Activated T-helper 1 cell treated with anti-CD3 and anti-CD28 coated beads, Interleukin-12 subunit alpha, Interleukin-12 subunit beta, Interleukin-2, Interleukin-4 antibody, amounts not matched to agents 30 ng/mL and 10 ng/mL and 1 ng/mL, durations not matched to agents 14 hours and 24 hours and 36 hours (primary cell): ENCODE measurements at regions of chr9 and their contacts with region 1.

Region 1: DNA sequence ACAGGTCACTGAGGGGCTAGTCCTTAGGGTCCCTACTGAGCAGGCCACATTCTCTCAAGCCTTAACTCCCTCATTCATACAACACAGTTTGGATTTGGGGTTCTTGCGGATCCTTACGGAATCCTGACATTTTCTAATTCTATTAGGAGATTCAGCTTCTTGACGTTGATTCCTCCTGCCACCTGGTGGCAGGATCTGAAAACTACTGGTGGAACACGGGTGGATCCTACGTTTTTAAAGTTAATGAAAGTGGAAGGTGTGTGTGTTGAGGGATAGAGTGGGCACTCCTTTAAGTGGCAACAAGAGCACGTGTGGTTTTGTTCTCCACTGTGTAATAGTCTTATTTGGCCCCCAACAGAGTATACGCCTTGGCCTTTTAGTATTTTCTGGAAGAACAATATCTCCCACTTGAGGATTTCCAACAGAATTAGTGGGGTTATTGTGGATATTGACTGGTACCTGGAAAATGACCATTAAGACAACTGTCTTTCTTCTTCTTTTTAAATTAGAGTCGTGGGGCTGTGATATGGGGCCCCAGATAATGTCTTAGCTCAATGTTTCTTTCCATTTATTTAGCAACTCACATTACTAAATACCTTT is 25.2 kb downstream of the SLC28A3 start:
- DNase-seq: peak; percentile 46
- H3K4me3 Mint-ChIP-seq: no peak overlapping the region
- H3K27ac Mint-ChIP-seq: peak overlapping the region; percentile 15
- H3K4me1 Mint-ChIP-seq: peaks cover 41% of the 10 kb centered on the region
- H3K27me3 Mint-ChIP-seq: no peaks in the 10 kb centered on the region

Region 2: GRCh38 chr9:83937911-83938323 is 377.5 kb before region 1 on chr9:
- intact Hi-C with region 1: loop called (anchors 1 kb)
- DNase-seq: peak; percentile 20
- H3K4me3 Mint-ChIP-seq: no peak overlapping the region
- H3K27ac Mint-ChIP-seq: no peak overlapping the region
- H3K4me1 Mint-ChIP-seq: peaks cover 5% of the 10 kb centered on the region
- H3K27me3 Mint-ChIP-seq: peaks cover 2% of the 10 kb centered on the region

Region 3: DNA sequence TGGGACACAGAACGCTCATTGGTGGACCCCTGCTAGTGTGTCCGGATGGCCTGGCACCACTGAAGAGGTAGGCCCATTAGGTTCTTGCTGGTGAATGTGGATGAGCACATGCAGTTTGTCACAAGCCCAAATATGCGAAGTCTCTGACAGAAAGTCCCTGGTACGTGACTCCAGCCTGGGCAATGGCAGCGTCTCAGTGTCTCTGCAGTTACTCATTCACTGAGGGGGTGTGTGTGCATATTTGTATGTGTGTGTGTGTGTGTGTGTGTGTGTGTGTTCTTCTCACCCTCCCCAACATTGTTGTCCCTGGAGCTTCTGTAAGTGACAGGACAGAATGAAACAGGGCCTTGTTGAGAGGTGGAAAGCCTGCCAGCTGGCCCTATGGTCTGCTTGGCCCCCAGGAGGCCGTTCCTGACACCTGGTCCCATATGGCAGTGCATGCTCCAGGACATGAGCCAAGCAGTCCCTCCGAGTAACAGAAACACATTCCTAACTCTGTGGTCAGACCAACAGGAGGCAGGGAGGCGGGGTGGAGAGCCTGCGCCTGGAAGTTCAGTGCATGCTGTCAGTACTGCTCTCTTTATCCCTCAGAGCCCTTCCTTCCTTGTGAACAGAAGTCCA is 144.7 kb before region 1 on chr9:
- intact Hi-C with region 1: loop called (anchors 1 kb)
- DNase-seq: no peak
- H3K4me3 Mint-ChIP-seq: no peak overlapping the region
- H3K27ac Mint-ChIP-seq: no peak overlapping the region
- H3K4me1 Mint-ChIP-seq: no peaks in the 10 kb centered on the region
- H3K27me3 Mint-ChIP-seq: peaks cover 2% of the 10 kb centered on the region

Region 4: GRCh38 chr9:84261082-84261746 is 54.2 kb before region 1 on chr9:
- intact Hi-C with region 1: loop called (anchors 1 kb)
- DNase-seq: peak; percentile 33
- H3K4me3 Mint-ChIP-seq: no peak overlapping the region
- H3K27ac Mint-ChIP-seq: no peak overlapping the region
- H3K4me1 Mint-ChIP-seq: peaks cover 21% of the 10 kb centered on the region
- H3K27me3 Mint-ChIP-seq: no peaks in the 10 kb centered on the region

Region 5: GRCh38 chr9:84271531-84271900 is 43.9 kb before region 1 on chr9:
- intact Hi-C with region 1: loop called (anchors 2 kb)
- DNase-seq: peak; percentile 65
- H3K4me3 Mint-ChIP-seq: peak overlapping the region; percentile 78
- H3K27ac Mint-ChIP-seq: peak overlapping the region; percentile 70
- H3K4me1 Mint-ChIP-seq: peaks cover 42% of the 10 kb centered on the region
- H3K27me3 Mint-ChIP-seq: peaks cover 5% of the 10 kb centered on the region

Region 6: DNA sequence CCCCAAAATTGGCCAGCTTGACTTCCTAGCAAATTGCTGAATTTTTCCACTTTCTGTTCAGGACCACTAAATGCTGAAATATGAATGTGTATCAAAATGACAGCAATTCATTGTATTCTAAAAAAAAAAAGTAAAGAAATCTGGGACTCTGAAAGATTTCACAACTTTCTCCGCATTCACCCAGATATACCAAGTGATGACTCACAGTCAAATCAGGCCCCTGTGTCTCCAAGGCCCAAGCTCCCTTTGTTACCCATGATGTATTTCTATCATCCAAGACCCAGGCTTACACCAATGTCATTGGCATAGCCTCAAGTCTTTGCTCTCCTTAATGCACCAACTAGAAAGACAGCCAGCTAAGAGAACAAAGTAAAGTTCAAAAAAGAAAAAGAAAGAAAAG is 848.0 kb after region 1 on chr9:
- intact Hi-C with region 1: no loop called
- DNase-seq: no peak
- H3K4me3 Mint-ChIP-seq: no peak overlapping the region
- H3K27ac Mint-ChIP-seq: no peak overlapping the region
- H3K4me1 Mint-ChIP-seq: no peaks in the 10 kb centered on the region
- H3K27me3 Mint-ChIP-seq: peaks cover 1% of the 10 kb centered on the region